Aorta (tissue), 5 donors: ENCODE measurements at regions of chr11 and their contacts with region 1.

Region 1: DNA sequence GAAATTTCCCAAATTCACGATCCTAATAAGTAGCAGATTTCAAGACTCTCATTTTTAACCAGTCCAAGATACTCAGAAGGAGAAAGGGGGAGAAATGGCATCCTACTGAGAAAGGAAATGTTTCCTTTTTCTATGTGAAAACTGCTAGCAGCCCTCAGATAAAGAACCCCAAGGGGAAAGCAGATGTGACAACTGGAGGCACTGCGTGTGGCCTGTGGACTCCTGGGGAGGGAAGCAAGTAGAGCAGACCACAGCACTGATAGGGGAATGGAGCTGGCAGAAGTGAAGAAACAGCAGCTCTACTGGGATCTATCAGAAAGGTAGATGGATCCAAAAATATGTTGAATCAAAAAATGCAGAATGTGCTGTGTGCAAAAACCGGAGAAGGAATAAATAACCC is 239.7 kb upstream of the API5 start:
- DNase-seq: no peak
- ATAC-seq: no peak
- H3K4me3 ChIP-seq: no peak overlapping the region
- H3K27ac ChIP-seq: no peak overlapping the region
- H3K4me1 ChIP-seq: no peaks in the 10 kb centered on the region
- H3K27me3 ChIP-seq: no peaks in the 10 kb centered on the region

Region 2: DNA sequence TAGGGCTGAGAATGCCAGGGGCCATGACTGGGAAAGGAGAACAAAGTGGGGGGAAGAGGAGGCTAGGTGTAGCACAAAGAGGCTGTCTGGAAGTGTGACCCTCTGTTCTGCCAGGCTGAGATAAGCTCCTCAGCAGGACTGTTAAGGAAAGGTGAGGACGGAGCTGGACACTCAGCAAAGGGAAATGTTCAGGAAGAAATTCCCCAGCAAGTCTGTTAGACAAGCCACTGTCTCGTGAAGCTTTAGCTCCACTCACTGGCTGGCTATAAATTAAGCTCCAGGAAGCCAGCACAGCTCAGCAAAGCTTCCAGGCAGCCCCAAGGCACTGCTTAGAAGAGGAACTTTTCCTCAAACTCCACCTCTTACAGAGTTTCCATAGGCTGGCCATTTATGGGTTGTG is 58.5 kb after region 1 on chr11:
- intact Hi-C with region 1: loop called in 1 of 2 experiments (anchors 10 kb)
- DNase-seq: no peak
- ATAC-seq: no peak
- H3K4me3 ChIP-seq: no peak overlapping the region
- H3K27ac ChIP-seq: no peak overlapping the region
- H3K4me1 ChIP-seq: no peaks in the 10 kb centered on the region
- H3K27me3 ChIP-seq: no peaks in the 10 kb centered on the region